Activated T-helper 2 cell treated with anti-CD3 and anti-CD28 coated beads, Interferon-gamma antibody, Interleukin-2, Interleukin-4, amounts not matched to agents 10 μg/mL and 5 μg/mL and 100 μg/mL, durations not matched to agents 14 hours and 24 hours and 36 hours (primary cell): ENCODE measurements at regions of chr6 and their contacts with region 1.

Region 1: DNA sequence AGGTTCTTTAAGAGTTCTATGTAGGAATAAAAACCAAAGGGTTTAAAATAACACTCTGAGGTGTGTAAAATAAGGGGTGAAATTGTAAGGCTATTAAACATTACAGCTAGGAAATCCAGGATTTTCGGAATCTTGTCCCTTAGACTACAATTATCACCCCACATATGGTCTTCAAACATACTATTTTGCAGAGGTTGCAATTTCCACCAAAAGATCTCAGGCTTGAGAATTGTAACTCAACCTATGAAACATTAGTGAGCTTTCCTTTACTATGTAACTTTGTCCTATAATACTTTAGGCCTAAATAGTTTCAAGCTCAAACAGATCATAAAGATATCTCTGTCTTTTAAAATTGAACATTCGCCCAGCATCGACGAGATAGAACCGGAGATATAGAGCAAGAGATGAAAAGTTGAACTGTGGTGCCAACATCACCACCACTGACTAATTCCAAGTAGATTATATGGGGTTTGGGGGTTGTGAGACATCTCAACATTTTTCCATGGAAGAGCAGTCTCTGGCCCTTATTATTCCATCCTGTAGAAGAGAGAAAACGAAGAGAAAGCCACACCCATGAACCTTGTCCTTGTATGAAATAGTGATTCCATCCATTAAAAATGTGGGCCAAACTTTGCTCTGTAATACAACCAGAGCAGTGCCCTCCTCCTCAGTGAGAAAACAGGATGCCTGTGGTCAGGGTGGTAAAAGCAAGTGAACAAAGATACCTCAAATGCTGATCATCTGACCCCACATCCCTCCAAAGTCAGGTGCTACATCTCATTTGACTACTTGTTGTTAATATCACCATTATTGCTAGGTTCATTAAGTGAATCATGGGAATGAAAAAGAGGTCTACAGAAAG is 284.5 kb upstream of the GJE1 start:
- DNase-seq: no peak
- H3K4me3 Mint-ChIP-seq: no peak overlapping the region
- H3K27ac Mint-ChIP-seq: no peak overlapping the region
- H3K4me1 Mint-ChIP-seq: peaks cover 4% of the 10 kb centered on the region
- H3K27me3 Mint-ChIP-seq: no peaks in the 10 kb centered on the region

Region 2: GRCh38 chr6:141829996-141830395 is 18.3 kb before region 1 on chr6:
- intact Hi-C with region 1: loop called (anchors 2 kb)
- DNase-seq: no peak
- H3K4me3 Mint-ChIP-seq: no peak overlapping the region
- H3K27ac Mint-ChIP-seq: no peak overlapping the region
- H3K4me1 Mint-ChIP-seq: no peaks in the 10 kb centered on the region
- H3K27me3 Mint-ChIP-seq: no peaks in the 10 kb centered on the region